ENCODE measurements at regions of chr9 and their contacts with region 1.

Region 1: GRCh38 chr9:87500491-87501270 is 3.0 kb downstream of the DAPK1 start:
- DNase-seq: no peak
- ATAC-seq: no peak
- H3K4me3 ChIP-seq: peak overlapping the region in 1 of 2 donors; percentile 74
- H3K27ac ChIP-seq: peak overlapping the region in 1 of 2 donors; percentile 85
- H3K4me1 ChIP-seq: peaks cover 32 to 71% of the 10 kb centered on the region in 2 donors
- H3K27me3 ChIP-seq: peaks cover 0 to 39% of the 10 kb centered on the region in 2 donors
- CTCF ChIP-seq: no peak

Region 2: GRCh38 chr9:87599901-87600610 is 99.4 kb after region 1 on chr9:
- intact Hi-C with region 1: loop called in 1 of 2 experiments (anchors 10 kb)
- DNase-seq: peak in 2 of 4 donors; percentile 80 to 85
- ATAC-seq: peak; percentile 51
- H3K4me3 ChIP-seq: no peak overlapping the region
- H3K27ac ChIP-seq: peak overlapping the region; percentile 73 to 83
- H3K4me1 ChIP-seq: peaks cover 37 to 59% of the 10 kb centered on the region in 2 donors
- H3K27me3 ChIP-seq: no peaks in the 10 kb centered on the region
- CTCF ChIP-seq: no peak